ENCODE measurements at regions of chr12 and their contacts with region 1.

Region 1: DNA sequence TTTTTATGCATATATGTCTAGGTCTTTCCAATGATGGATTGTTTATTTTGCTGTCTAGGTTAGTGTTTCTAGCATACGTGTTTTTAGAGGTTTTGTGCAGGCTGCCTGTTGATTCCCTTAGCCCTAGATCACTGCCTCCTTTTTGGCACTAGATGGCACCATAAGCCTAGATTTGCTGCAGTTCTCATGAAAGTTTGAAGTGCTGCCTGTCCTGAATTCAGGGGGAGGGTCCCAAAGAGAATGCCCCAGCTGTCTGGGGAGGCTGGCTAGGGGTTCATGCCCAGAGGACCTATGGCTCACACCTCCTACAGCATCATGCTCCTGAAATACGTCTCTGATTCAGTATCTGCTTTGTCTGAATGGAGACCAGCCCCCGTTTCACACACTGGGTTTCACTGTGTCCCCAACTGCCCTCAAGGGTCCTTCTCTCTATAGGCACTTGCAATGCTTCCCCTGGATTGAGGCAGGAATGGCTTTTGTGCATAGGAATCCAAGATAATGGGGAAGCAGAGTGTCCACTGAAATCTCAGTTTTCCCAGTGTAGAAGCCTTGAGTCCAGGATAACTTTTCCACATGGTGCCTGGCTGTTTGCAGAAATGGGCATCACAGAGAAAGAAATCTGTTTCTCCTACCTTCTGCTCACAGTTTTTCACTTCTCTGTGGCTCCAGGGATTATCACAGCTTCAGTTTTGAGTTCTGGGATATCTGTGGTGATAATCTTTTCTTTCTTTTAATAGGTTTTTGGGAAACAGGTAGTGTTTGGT is 14.2 kb upstream of the TXNRD1 start:
- DNase-seq: peak; percentile 29
- H3K4me3 Mint-ChIP-seq: no peak overlapping the region
- H3K27ac Mint-ChIP-seq: no peak overlapping the region
- H3K4me1 Mint-ChIP-seq: no peaks in the 10 kb centered on the region
- H3K27me3 Mint-ChIP-seq: peaks cover 20% of the 10 kb centered on the region

Region 2: GRCh38 chr12:103806803-103807202 is 394.6 kb before region 1 on chr12:
- intact Hi-C with region 1: no loop called
- DNase-seq: no peak
- H3K4me3 Mint-ChIP-seq: no peak overlapping the region
- H3K27ac Mint-ChIP-seq: no peak overlapping the region
- H3K4me1 Mint-ChIP-seq: peaks cover 6% of the 10 kb centered on the region
- H3K27me3 Mint-ChIP-seq: no peaks in the 10 kb centered on the region

Region 3: GRCh38 chr12:103852498-103852997 is 348.9 kb before region 1 on chr12:
- intact Hi-C with region 1: no loop called
- DNase-seq: no peak
- H3K4me3 Mint-ChIP-seq: no peak overlapping the region
- H3K27ac Mint-ChIP-seq: no peak overlapping the region
- H3K4me1 Mint-ChIP-seq: peaks cover 3% of the 10 kb centered on the region
- H3K27me3 Mint-ChIP-seq: peaks cover 6% of the 10 kb centered on the region

Region 4: DNA sequence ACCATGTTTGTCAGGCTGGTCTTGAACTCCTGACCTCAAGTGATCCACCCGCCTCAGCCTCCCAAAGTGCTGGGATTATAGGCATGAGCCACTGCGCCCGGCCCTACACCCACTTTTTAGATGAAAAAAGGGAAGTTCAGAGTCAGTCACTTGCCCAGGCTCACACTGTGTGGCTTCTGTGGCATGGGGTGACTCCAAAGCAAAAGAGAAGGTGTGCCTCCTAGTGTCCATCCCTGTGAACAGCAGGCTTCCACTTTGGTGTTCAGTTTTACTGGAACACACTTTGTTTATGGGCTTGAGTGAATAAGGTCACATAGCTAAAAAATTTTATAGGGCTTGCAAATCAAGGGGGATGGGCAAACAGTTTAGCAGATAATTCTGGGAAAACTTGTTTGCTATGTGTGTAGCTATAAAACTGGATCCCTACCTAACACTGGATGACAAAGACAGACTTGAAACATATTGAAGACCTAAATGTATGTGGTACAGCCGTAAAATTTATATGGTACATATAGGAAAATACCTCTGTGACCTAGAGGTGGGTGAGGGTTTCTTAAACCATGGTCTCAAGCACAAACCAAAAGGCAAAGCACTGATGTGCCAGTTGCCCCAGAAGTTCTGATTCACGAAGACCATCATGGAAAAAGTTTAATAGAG is 157.1 kb after region 1 on chr12:
- intact Hi-C with region 1: loop called (anchors 1 kb)
- DNase-seq: peak; percentile 60
- H3K4me3 Mint-ChIP-seq: no peak overlapping the region
- H3K27ac Mint-ChIP-seq: no peak overlapping the region
- H3K4me1 Mint-ChIP-seq: peaks cover 8% of the 10 kb centered on the region
- H3K27me3 Mint-ChIP-seq: no peaks in the 10 kb centered on the region

Measured in activated T-helper 2 cell treated with anti-CD3 and anti-CD28 coated beads, Interferon-gamma antibody, Interleukin-2, Interleukin-4, amounts not matched to agents 10 μg/mL and 5 μg/mL and 100 μg/mL, durations not matched to agents 14 hours and 24 hours and 36 hours (primary cell).